ENCODE measurements at regions of chr11 and their contacts with region 1.

Region 1: DNA sequence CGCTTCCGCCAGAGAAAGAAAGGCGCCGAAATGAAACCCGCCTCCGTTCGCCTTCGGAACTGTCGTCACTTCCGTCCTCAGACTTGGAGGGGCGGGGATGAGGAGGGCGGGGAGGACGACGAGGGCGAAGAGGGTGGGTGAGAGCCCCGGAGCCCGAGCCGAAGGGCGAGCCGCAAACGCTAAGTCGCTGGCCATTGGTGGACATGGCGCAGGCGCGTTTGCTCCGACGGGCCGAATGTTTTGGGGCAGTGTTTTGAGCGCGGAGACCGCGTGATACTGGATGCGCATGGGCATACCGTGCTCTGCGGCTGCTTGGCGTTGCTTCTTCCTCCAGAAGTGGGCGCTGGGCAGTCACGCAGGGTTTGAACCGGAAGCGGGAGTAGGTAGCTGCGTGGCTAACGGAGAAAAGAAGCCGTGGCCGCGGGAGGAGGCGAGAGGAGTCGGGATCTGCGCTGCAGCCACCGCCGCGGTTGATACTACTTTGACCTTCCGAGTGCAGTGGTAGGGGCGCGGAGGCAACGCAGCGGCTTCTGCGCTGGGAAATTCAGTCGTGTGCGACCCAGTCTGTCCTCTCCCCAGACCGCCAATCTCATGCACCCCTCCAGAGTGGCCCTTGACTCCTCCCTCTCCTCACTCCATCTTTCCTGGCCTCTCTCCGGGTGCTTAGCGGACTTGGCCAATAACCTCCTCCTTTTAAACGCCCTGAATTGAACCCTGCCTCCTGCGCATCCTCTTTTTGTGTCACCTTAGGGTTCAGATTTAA is at the start of gene ATM:
- DNase-seq: peak; percentile 99
- H3K4me3 Mint-ChIP-seq: no peak within 1 kb of the TSS
- H3K27ac Mint-ChIP-seq: no peak within 1 kb of the TSS
- H3K4me1 Mint-ChIP-seq: peaks cover 46% of the 10 kb centered on the region
- H3K27me3 Mint-ChIP-seq: no peaks in the 10 kb centered on the region

Region 2: GRCh38 chr11:108237058-108237481 is 14.2 kb after region 1 on chr11:
- CTCF ChIA-PET with region 1: interaction called, 20 read pairs
- DNase-seq: no peak
- H3K4me3 Mint-ChIP-seq: peak overlapping the region; percentile 59
- H3K27ac Mint-ChIP-seq: peak overlapping the region; percentile 99
- H3K4me1 Mint-ChIP-seq: peaks cover 90% of the 10 kb centered on the region
- H3K27me3 Mint-ChIP-seq: no peaks in the 10 kb centered on the region